SK-N-SH (cell line): ENCODE measurements at regions of chr17 and their contacts with region 1.

Region 1: GRCh38 chr17:42609182-42609813 is at the starts of genes RETREG3 and TUBG1:
- DNase-seq: peak; percentile 100
- H3K4me3 ChIP-seq: peak within 1 kb of the TSS; percentile 72 to 99
- H3K27ac ChIP-seq: peak within 1 kb of the TSS; percentile 80 to 91
- H3K4me1 ChIP-seq: peaks cover 0 to 6% of the 10 kb centered on the region in 2 experiments; a peak in 2 of 4 replicates
- H3K27me3 ChIP-seq: no peaks in the 10 kb centered on the region
- CTCF ChIP-seq: peak; percentile 43
- EP300 ChIP-seq: no peak
- RAD21 ChIP-seq: peak; percentile 11; the same call in 1 of the 2 replicates
- polyA plus RNA-seq, gene RETREG3: 13.3 and 24.9 TPM in 2 replicates
- polyA plus RNA-seq, gene TUBG1: 72.4 and 145 TPM in 2 replicates

Region 2: DNA sequence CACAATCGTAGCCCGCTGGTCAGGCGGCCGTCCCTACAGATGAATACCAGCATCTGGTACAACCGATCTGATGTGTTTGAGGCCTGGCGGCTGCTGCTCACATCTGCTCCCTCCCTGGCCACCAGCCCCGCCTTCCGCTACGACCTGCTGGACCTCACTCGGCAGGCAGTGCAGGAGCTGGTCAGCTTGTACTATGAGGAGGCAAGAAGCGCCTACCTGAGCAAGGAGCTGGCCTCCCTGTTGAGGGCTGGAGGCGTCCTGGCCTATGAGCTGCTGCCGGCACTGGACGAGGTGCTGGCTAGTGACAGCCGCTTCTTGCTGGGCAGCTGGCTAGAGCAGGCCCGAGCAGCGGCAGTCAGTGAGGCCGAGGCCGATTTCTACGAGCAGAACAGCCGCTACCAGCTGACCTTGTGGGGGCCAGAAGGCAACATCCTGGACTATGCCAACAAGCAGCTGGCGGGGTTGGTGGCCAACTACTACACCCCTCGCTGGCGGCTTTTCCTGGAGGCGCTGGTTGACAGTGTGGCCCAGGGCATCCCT is 65.7 kb before region 1 on chr17:
- CTCF ChIA-PET with region 1: no interaction called
- POLR2A ChIA-PET with region 1: no interaction called
- DNase-seq: no peak
- H3K4me3 ChIP-seq: no peak overlapping the region
- H3K27ac ChIP-seq: no peak overlapping the region
- H3K4me1 ChIP-seq: no peaks in the 10 kb centered on the region
- H3K27me3 ChIP-seq: no peaks in the 10 kb centered on the region
- CTCF ChIP-seq: no peak
- EP300 ChIP-seq: no peak
- RAD21 ChIP-seq: no peak

Region 3: GRCh38 chr17:42598905-42599304 is 10.4 kb before region 1 on chr17:
- CTCF ChIA-PET with region 1: interaction called, 7 read pairs
- POLR2A ChIA-PET with region 1: interaction called, 11 read pairs
- DNase-seq: no peak
- H3K4me3 ChIP-seq: no peak overlapping the region
- H3K27ac ChIP-seq: no peak overlapping the region
- H3K4me1 ChIP-seq: no peaks in the 10 kb centered on the region
- H3K27me3 ChIP-seq: no peaks in the 10 kb centered on the region
- CTCF ChIP-seq: no peak
- EP300 ChIP-seq: no peak
- RAD21 ChIP-seq: no peak

Region 4: GRCh38 chr17:42653179-42654124 is 44.2 kb after region 1 on chr17:
- CTCF ChIA-PET with region 1: no interaction called
- POLR2A ChIA-PET with region 1: interaction called, 15 read pairs
- DNase-seq: peak; percentile 83
- H3K4me3 ChIP-seq: peak overlapping the region; percentile 32 to 40
- H3K27ac ChIP-seq: peak overlapping the region; percentile 87 to 93
- H3K4me1 ChIP-seq: peaks cover 0 to 12% of the 10 kb centered on the region in 2 experiments; a peak in 1 of 4 replicates
- H3K27me3 ChIP-seq: no peaks in the 10 kb centered on the region
- CTCF ChIP-seq: no peak
- EP300 ChIP-seq: peak in 1 of 2 experiments; percentile 97; a peak in 3 of 4 replicates
- RAD21 ChIP-seq: 0 out of 2 replicates have a peak, but pooled peaks have one; percentile 25

Region 5: DNA sequence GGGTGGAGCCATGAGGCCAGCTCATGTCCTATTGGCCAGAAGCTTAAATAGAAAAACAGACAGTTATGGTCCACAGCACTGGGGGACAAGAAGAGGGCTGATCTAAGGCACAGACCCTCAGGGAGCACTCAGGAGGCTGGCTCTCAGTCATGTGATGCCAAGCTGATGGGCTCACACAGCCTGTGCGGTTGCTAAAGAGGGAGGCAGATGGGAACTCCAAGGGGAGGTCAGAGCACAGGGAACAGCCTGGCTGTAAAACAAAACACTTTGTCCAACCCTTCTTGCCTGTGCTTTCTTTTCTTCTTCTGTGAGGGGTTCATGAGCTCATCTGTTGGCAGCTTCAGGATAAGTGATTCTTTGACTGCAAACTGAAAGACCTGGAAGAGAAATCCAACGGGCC is 100.3 kb after region 1 on chr17:
- CTCF ChIA-PET with region 1: no interaction called
- POLR2A ChIA-PET with region 1: no interaction called
- DNase-seq: no peak
- H3K4me3 ChIP-seq: no peak overlapping the region
- H3K27ac ChIP-seq: no peak overlapping the region
- H3K4me1 ChIP-seq: no peaks in the 10 kb centered on the region
- H3K27me3 ChIP-seq: no peaks in the 10 kb centered on the region
- CTCF ChIP-seq: no peak
- EP300 ChIP-seq: no peak
- RAD21 ChIP-seq: no peak

Region 6: GRCh38 chr17:42819944-42820535 is 210.7 kb after region 1 on chr17:
- CTCF ChIA-PET with region 1: no interaction called
- POLR2A ChIA-PET with region 1: no interaction called
- DNase-seq: peak; percentile 70
- H3K4me3 ChIP-seq: peak overlapping the region in 1 of 2 experiments; percentile 27; a peak in 1 of 4 replicates
- H3K27ac ChIP-seq: no peak overlapping the region
- H3K4me1 ChIP-seq: peaks cover 7 to 11% of the 10 kb centered on the region in 2 experiments
- H3K27me3 ChIP-seq: no peaks in the 10 kb centered on the region
- CTCF ChIP-seq: peak; percentile 89
- EP300 ChIP-seq: no peak
- RAD21 ChIP-seq: peak; percentile 40